CD4-positive, alpha-beta T cell (primary cell): ENCODE measurements at regions of chr19 and their contacts with region 1.

Region 1: DNA sequence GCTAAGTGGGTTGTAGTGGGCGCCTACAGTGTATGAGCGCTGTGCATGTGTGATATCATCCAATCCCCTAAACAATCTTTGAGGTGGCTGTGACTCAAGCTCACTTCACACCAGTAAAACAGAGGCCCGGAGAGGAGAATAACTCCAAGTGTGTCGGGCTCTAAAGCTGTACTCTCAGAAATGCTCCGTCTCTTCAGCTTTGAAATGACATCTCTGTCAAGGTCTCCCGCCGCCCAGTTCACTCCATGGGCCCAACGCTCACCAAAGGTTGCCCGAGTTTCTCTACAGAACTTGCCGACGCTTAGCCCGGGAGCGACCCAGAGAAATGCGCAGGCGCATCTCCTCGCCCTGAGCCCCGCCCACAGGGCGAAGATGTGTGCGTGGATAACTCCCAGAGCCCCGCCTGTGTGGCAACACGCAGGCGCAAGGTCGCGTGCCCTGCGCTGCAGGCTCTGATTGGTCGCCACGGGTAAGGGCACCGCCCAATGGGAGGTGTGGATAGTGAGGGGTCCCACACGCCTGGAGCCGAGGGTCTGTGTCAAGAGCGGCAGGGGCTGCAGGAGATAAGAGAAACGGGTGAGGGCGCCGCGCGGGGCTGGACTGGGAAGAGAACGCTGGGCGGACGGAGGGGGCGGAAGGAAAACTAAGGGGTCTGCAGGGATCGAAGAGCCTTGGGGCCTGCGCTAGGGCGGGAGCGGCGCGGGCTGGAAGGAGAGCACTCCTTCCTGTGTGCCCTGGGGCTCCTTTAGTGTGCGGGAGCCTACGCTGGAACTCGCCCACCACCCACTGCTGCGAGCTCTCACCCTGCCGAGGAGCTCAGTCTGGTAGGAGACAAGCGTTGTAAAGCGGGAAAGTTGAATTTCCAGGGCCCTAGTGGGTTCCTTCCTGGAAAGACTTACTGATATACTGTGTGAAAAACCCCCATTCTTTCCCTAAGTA is at the start of gene ZNF526:
- DNase-seq: peak; percentile 93 to 99 (median 96)
- ATAC-seq: peak; percentile 80
- H3K4me3 ChIP-seq: peak within 1 kb of the TSS; percentile 98
- H3K4me3 Mint-ChIP-seq: peak within 1 kb of the TSS; percentile 96
- H3K27ac ChIP-seq: peak within 1 kb of the TSS; percentile 70 to 78
- H3K27ac Mint-ChIP-seq: peak within 1 kb of the TSS; percentile 93
- H3K4me1 ChIP-seq: peaks cover 64% of the 10 kb centered on the region
- H3K4me1 Mint-ChIP-seq: peaks cover 58% of the 10 kb centered on the region
- H3K27me3 ChIP-seq: no peaks in the 10 kb centered on the region
- H3K27me3 Mint-ChIP-seq: no peaks in the 10 kb centered on the region
- CTCF ChIP-seq: no peak
- total RNA-seq, gene ZNF526: 5.0 to 6.2 TPM

Region 2: GRCh38 chr19:41859618-41860418 is 360.3 kb before region 1 on chr19 and contains the start of gene RPS19:
- CTCF ChIA-PET with region 1: no interaction called
- POLR2A ChIA-PET with region 1: no interaction called
- intact Hi-C with region 1: no loop called
- DNase-seq: peak; percentile 95 to 99 (median 98)
- ATAC-seq: peak; percentile 85
- H3K4me3 ChIP-seq: peak within 1 kb of the TSS; percentile 74
- H3K4me3 Mint-ChIP-seq: peak within 1 kb of the TSS; percentile 87
- H3K27ac ChIP-seq: peak within 1 kb of the TSS; percentile 89 to 98
- H3K27ac Mint-ChIP-seq: peak within 1 kb of the TSS; percentile 86
- H3K4me1 ChIP-seq: peaks cover 49% of the 10 kb centered on the region
- H3K4me1 Mint-ChIP-seq: peaks cover 48% of the 10 kb centered on the region
- H3K27me3 ChIP-seq: no peaks in the 10 kb centered on the region
- H3K27me3 Mint-ChIP-seq: no peaks in the 10 kb centered on the region
- CTCF ChIP-seq: peak; percentile 84
- total RNA-seq, gene RPS19: 3,668 to 3,697 TPM

Region 3: DNA sequence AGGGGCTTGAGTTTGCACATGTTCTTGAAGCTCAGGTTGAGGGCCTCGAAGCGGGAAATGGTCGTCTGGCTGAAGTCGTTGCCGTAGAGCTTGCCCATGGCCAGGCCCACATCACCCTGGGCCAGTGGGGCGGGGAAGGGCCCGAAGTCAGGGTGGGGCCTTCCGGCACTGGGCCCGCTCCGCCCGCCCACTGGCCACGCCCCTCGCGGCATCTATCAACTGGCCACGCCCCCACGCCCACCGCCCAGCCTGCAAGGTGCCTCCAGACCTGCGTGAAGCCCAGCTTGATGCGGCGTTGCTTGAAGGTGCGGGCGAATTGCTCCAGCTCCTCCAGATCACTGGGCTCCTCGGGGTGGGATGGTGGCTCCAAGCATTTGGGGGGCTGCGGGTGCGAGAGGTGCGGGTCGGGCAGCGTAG is 124.3 kb before region 1 on chr19:
- CTCF ChIA-PET with region 1: no interaction called
- POLR2A ChIA-PET with region 1: no interaction called
- intact Hi-C with region 1: no loop called
- DNase-seq: no peak
- ATAC-seq: no peak
- H3K4me3 ChIP-seq: no peak overlapping the region
- H3K4me3 Mint-ChIP-seq: no peak overlapping the region
- H3K27ac ChIP-seq: no peak overlapping the region
- H3K27ac Mint-ChIP-seq: no peak overlapping the region
- H3K4me1 ChIP-seq: peaks cover 9% of the 10 kb centered on the region
- H3K4me1 Mint-ChIP-seq: peaks cover 8% of the 10 kb centered on the region
- H3K27me3 ChIP-seq: no peaks in the 10 kb centered on the region
- H3K27me3 Mint-ChIP-seq: no peaks in the 10 kb centered on the region
- CTCF ChIP-seq: no peak

Region 4: DNA sequence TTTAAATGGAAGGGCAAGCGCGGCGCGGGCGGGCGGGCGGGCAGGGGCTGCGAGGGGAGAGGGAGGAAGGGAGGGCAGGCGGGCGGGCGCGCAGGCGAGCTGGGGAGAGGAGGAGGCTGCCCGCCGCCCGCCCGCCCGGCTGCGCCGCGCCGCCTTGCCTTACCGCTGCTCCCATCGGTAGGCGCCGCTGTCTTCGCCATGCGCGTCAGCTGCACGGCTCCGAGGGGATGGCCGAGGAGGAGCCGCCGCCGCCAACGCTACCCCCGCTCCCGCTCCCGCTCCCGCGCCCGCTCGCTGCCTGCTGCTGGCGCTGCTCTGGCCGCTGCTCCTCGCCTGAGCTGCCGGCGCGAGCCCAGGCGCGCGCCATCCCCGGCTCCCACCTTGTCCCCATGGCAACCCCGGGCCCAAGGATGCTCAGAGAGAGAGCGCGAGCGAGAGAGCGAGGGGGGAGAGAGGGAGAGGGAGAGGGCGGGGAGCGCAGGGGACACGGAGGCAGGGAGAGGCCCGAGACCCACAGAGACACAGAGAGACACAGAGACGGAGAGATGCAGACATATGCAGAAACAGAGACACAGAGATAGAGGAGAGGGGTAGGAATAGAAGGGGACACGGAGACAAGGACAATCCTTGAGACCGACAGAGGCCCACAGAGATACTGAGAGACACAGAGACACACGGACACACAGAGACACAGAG is 42.9 kb before region 1 on chr19:
- CTCF ChIA-PET with region 1: no interaction called
- POLR2A ChIA-PET with region 1: interaction called, 11 read pairs
- intact Hi-C with region 1: loop called (anchors 5 kb)
- DNase-seq: peak; percentile 61 to 91 (median 72)
- ATAC-seq: peak; percentile 95
- H3K4me3 ChIP-seq: peak overlapping the region; percentile 56
- H3K4me3 Mint-ChIP-seq: no peak overlapping the region
- H3K27ac ChIP-seq: no peak overlapping the region
- H3K27ac Mint-ChIP-seq: no peak overlapping the region
- H3K4me1 ChIP-seq: peaks cover 34% of the 10 kb centered on the region
- H3K4me1 Mint-ChIP-seq: peaks cover 25% of the 10 kb centered on the region
- H3K27me3 ChIP-seq: peaks cover 36 to 37% of the 10 kb centered on the region in 2 experiments
- H3K27me3 Mint-ChIP-seq: peaks cover 35% of the 10 kb centered on the region
- CTCF ChIP-seq: peak; percentile 35

Region 5: GRCh38 chr19:42233106-42233505 is 13.0 kb after region 1 on chr19:
- CTCF ChIA-PET with region 1: no interaction called
- POLR2A ChIA-PET with region 1: interaction called, 10 read pairs
- intact Hi-C with region 1: no loop called
- DNase-seq: no peak
- ATAC-seq: no peak
- H3K4me3 ChIP-seq: no peak overlapping the region
- H3K4me3 Mint-ChIP-seq: no peak overlapping the region
- H3K27ac ChIP-seq: no peak overlapping the region
- H3K27ac Mint-ChIP-seq: peak overlapping the region; percentile 20
- H3K4me1 ChIP-seq: peaks cover 15% of the 10 kb centered on the region
- H3K4me1 Mint-ChIP-seq: peaks cover 16% of the 10 kb centered on the region
- H3K27me3 ChIP-seq: no peaks in the 10 kb centered on the region
- H3K27me3 Mint-ChIP-seq: no peaks in the 10 kb centered on the region
- CTCF ChIP-seq: no peak